Activated CD4-positive, alpha-beta memory T cell treated with anti-CD3 and anti-CD28 coated beads for 36 hours (primary cell): ENCODE measurements at regions of chr2 and their contacts with region 1.

Region 1: DNA sequence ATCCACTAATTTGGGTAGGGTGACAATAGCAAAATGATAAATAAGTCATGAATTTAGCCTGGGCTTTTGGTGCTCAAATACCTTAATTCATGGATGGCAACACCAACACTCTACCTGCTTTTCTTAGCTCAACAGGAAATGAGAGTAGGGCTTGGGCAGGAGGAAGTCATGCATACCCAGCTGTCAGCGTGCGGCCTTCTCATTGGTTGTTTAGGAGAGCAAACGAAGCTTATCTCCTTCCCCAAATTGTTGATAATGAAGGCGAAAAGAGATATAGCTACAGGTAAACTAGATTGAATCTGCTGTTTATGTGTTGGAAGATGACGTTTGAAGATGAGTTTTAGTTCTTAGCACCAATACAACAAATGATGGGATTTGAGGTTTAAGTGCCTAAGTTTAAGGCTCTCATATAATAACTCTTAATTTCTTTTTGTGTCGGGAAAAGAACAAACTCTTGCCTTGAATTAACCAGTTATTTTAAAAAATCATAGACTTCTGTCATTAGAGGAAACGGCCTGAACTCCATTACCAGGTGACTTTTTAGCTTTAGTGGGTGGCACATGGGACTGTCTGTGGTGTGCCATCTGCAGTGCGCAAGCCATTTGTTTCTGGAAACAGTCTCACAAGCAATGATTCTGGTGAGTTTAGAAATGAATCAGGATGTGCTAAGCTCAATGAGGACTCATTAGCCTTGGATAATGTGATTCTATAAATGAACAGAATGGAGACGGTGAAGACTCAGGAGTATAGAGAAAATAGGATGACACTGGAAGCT is 19.8 kb downstream of the MAP4K4 start:
- DNase-seq: peak; percentile 75
- H3K4me3 Mint-ChIP-seq: peak overlapping the region; percentile 27
- H3K27ac Mint-ChIP-seq: peak overlapping the region; percentile 88
- H3K4me1 Mint-ChIP-seq: peaks cover 85% of the 10 kb centered on the region
- H3K27me3 Mint-ChIP-seq: no peaks in the 10 kb centered on the region

Region 2: DNA sequence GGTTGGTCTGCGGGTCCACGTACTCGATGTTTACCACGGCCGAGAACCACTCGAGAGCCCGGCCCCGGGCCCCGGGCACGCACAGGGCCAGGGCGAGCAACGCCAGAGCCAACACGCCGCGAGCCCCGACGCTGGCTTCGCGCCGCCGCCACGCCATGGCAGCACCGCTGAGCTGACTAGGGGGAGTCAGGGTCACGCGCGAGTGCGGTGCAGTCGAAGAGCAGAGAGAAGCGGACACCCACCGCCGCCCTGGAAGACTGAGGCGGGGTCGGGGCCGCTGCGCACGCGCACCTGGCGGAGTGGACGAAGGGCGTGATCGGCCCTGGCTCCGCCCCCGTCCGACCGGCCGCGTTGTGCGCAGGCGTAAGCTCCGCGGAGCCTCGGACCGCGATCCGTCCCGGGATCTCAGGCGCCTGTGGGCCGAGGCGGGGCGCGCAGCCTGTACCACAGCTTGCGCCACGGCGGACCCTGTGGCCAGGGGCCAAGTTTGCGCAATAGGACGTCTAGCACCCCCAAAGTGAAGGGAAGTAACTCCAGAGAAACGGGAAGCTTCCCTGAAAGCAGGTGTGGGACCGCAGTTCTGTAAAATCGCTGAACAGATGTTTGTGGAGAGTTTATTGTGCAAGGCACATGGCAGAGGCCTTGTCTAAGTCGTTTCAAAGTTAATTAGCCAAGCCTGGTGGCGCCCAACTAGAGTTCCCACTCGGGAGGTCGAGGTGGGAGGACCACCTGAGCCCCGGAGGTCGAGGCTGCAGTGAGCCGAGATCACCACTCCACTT is 408.6 kb before region 1 on chr2 and contains the start of gene RNF149:
- CTCF ChIA-PET with region 1: no interaction called
- POLR2A ChIA-PET with region 1: no interaction called
- intact Hi-C with region 1: loop called (anchors 5 kb)
- DNase-seq: peak; percentile 92
- H3K4me3 Mint-ChIP-seq: peak within 1 kb of the TSS; percentile 98
- H3K27ac Mint-ChIP-seq: peak within 1 kb of the TSS; percentile 97
- H3K4me1 Mint-ChIP-seq: peaks cover 65% of the 10 kb centered on the region
- H3K27me3 Mint-ChIP-seq: no peaks in the 10 kb centered on the region
- total RNA-seq, gene RNF149: 42.1 to 46.9 TPM

Region 3: DNA sequence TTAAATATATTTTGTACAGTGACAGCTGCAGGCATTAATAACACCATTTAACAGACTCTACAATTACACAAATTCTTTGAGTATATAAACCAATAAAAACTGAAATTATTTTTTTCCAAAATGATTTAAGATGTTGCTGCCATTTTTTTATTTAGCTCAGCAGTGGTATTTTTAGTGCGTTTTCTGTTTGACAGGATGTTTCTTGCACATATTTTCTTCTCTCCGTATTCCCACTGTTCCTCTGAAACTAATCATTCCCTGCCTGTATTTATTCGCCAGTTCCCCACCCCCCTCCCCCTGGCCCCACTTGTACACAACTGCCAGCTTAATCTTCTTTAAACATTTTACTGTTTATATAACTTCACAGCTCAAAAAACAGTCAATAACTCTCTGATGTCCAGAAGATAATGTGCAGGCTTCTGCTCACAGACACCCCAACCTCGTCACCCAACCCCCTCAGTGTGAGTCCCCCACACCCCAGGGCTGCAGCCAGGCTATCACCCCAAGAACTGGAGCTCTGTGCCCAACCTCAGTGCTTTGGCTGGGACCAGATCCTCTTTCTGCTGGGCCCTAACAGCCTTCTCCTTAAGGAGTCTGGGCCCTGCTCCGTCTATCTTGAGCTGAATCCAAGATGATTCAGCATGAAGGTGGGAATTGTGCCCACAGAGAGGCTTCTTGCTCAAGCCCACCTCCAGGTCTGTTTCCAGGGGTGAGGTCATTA is 61.4 kb before region 1 on chr2:
- CTCF ChIA-PET with region 1: no interaction called
- POLR2A ChIA-PET with region 1: no interaction called
- intact Hi-C with region 1: loop called (anchors 1 kb)
- DNase-seq: no peak
- H3K4me3 Mint-ChIP-seq: no peak overlapping the region
- H3K27ac Mint-ChIP-seq: no peak overlapping the region
- H3K4me1 Mint-ChIP-seq: peaks cover 19% of the 10 kb centered on the region
- H3K27me3 Mint-ChIP-seq: no peaks in the 10 kb centered on the region

Region 4: DNA sequence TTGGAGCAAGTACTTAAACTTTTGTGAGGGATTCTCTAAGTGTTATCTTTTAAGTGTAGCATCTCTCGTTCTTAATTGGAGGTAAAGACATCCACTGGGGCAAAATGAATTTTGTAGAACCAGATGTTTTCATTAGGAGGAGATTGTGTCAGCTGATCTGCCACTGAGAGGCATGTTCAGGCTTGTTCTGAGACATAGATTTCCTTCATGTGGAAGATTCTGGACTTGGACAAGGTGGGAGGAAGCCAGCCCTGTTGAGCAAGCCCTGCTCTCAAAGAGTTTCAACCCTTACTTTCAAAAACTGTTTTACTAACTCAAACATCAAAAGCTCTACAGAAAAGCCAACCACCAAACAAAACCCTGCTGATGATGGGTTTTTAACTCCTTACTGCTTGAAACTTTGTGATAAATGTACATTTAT is 13.2 kb before region 1 on chr2:
- CTCF ChIA-PET with region 1: interaction called, 8 read pairs
- POLR2A ChIA-PET with region 1: interaction called, 43 read pairs
- intact Hi-C with region 1: loop called (anchors 1 kb)
- DNase-seq: peak; percentile 59
- H3K4me3 Mint-ChIP-seq: peak overlapping the region; percentile 62
- H3K27ac Mint-ChIP-seq: peak overlapping the region; percentile 87
- H3K4me1 Mint-ChIP-seq: peaks cover 74% of the 10 kb centered on the region
- H3K27me3 Mint-ChIP-seq: no peaks in the 10 kb centered on the region

Region 5: DNA sequence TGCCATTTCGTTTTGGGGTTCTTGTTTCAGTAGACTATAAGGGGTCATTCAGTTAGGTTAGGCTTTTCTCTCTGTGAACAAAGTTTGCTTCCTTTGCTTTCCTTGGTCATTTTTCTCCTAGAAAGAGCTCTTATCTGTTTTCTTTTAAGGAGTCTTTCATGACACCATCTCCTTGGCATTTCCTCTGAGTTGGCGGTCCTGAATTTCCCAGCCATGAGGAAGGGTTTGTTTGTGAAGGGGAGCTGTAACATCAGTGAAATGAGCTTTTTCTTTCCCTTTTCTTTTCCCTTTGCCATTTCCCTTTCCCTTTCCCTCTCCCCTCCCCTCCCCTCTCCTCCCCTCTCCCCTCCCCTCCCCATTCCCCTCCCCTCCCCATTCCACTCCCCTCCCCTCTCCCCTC is 41.9 kb after region 1 on chr2:
- CTCF ChIA-PET with region 1: interaction called, 3 read pairs
- POLR2A ChIA-PET with region 1: interaction called, 3 read pairs
- intact Hi-C with region 1: loop called (anchors 1 kb)
- DNase-seq: no peak
- H3K4me3 Mint-ChIP-seq: no peak overlapping the region
- H3K27ac Mint-ChIP-seq: no peak overlapping the region
- H3K4me1 Mint-ChIP-seq: peaks cover 67% of the 10 kb centered on the region
- H3K27me3 Mint-ChIP-seq: no peaks in the 10 kb centered on the region